ENCODE measurements at regions of chr20 and their contacts with region 1.

Region 1: GRCh38 chr20:1757072-1757471 is 99.5 kb upstream of the SIRPG start:
- DNase-seq: peak in 1 of 2 experiments; percentile 98
- H3K4me3 ChIP-seq: no peak overlapping the region
- H3K27ac ChIP-seq: peak overlapping the region; percentile 96
- H3K4me1 ChIP-seq: peaks cover 78% of the 10 kb centered on the region
- H3K27me3 ChIP-seq: no peaks in the 10 kb centered on the region
- CTCF ChIP-seq: no peak

Region 2: DNA sequence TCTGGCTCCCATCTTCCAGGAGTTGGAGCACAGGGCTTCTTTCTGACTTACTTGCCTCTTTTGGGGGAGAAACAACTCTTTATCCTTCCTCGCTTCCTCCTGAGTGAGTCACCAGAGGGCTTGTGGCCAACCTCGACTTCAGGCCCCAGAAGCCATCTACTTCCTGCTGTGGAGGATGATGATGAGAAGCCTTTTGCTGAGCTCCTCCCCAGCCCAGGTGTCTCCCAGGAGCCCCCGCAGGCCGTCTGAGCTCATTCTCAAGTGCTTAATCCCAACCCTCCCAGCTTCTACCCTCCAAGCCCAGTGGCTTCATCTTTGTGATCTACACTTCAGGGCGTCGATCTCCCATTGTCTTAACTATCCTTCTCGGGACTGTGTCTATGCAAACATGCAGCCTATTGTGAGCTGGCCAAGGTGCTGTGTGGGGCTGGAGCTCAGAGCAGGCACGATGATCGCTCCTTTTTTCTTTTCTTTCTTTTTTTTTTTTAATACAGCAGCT is 456.0 kb before region 1 on chr20:
- CTCF ChIA-PET with region 1: no interaction called
- POLR2A ChIA-PET with region 1: interaction called, 10 read pairs
- intact Hi-C with region 1: no loop called
- DNase-seq: peak; percentile 64 to 74
- H3K4me3 ChIP-seq: no peak overlapping the region
- H3K27ac ChIP-seq: peak overlapping the region; percentile 32; the same call in 1 of the 2 replicates
- H3K4me1 ChIP-seq: peaks cover 11% of the 10 kb centered on the region
- H3K27me3 ChIP-seq: no peaks in the 10 kb centered on the region
- CTCF ChIP-seq: no peak

Region 3: GRCh38 chr20:1567392-1568162 is 189.5 kb before region 1 on chr20:
- CTCF ChIA-PET with region 1: no interaction called
- POLR2A ChIA-PET with region 1: interaction called, 5 read pairs
- intact Hi-C with region 1: loop called (anchors 1 kb)
- DNase-seq: peak; percentile 76 to 97
- H3K4me3 ChIP-seq: no peak overlapping the region
- H3K27ac ChIP-seq: peak overlapping the region; percentile 99
- H3K4me1 ChIP-seq: peaks cover 67% of the 10 kb centered on the region
- H3K27me3 ChIP-seq: no peaks in the 10 kb centered on the region
- CTCF ChIP-seq: no peak

Region 4: DNA sequence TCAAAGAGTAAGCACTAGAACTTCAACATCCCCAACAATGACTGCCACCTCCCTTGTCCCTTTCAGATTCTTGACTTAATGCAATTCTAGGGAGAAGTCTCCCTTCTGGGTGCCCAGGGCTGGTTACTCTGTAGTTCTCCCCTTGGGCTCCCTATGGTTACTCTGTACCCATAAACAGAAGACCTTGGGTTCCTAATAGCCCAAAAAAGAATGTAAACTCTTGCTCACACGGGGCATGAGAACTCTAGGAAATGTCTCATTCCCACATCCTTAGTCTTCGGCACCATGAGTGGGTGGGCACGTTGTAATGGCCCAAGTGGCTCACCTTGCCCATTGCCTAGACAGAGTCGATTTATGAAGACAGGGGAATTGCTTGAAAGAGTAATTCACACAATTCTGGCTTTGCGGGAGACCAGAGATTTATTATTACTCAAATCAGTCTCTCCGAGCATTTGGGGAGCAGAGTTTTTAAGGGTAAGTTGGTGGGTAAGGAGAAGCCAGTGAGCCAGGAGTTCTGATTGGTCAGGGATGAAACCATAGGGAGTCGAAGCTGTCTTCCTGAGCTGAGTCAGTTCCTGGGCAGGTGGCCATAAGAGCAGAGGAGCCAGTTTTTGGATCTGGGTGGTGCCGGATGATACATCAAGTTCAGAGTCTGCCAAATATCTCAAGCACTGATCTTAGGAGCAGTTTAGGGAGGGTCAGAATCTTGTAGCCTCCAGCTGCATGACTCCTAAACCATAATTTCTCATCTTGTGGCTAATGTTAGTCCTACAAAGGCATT is 38.3 kb before region 1 on chr20:
- CTCF ChIA-PET with region 1: interaction called, 4 read pairs
- POLR2A ChIA-PET with region 1: interaction called, 3 read pairs
- intact Hi-C with region 1: loop called (anchors 1 kb)
- DNase-seq: peak; percentile 82 to 97
- H3K4me3 ChIP-seq: peak overlapping the region; percentile 31
- H3K27ac ChIP-seq: peak overlapping the region; percentile 99
- H3K4me1 ChIP-seq: peaks cover 77% of the 10 kb centered on the region
- H3K27me3 ChIP-seq: no peaks in the 10 kb centered on the region
- CTCF ChIP-seq: no peak

Region 5: GRCh38 chr20:1734269-1734858 is 22.7 kb before region 1 on chr20:
- CTCF ChIA-PET with region 1: no interaction called
- POLR2A ChIA-PET with region 1: interaction called, 3 read pairs
- intact Hi-C with region 1: loop called (anchors 2 kb)
- DNase-seq: no peak
- H3K4me3 ChIP-seq: no peak overlapping the region
- H3K27ac ChIP-seq: peak overlapping the region; percentile 91
- H3K4me1 ChIP-seq: peaks cover 50% of the 10 kb centered on the region
- H3K27me3 ChIP-seq: no peaks in the 10 kb centered on the region
- CTCF ChIP-seq: no peak

Region 6: GRCh38 chr20:1776681-1777475 is 19.8 kb after region 1 on chr20:
- CTCF ChIA-PET with region 1: interaction called, 7 read pairs
- POLR2A ChIA-PET with region 1: no interaction called
- intact Hi-C with region 1: loop called (anchors 1 kb)
- DNase-seq: peak; percentile 86 to 90
- H3K4me3 ChIP-seq: peak overlapping the region; percentile 70
- H3K27ac ChIP-seq: peak overlapping the region; percentile 74
- H3K4me1 ChIP-seq: peaks cover 27% of the 10 kb centered on the region
- H3K27me3 ChIP-seq: no peaks in the 10 kb centered on the region
- CTCF ChIP-seq: peak; percentile 89

Region 7: GRCh38 chr20:2405693-2406065 is 648.6 kb after region 1 on chr20:
- CTCF ChIA-PET with region 1: no interaction called
- POLR2A ChIA-PET with region 1: no interaction called
- intact Hi-C with region 1: no loop called
- DNase-seq: no peak
- H3K4me3 ChIP-seq: no peak overlapping the region
- H3K27ac ChIP-seq: no peak overlapping the region
- H3K4me1 ChIP-seq: no peaks in the 10 kb centered on the region
- H3K27me3 ChIP-seq: no peaks in the 10 kb centered on the region; the same call in 1 of the 2 replicates
- CTCF ChIP-seq: no peak

Measured in PC-9 (cell line).